Activated B cell treated with CpG ODN at 0.5 μM for 24 hours (primary cell): ENCODE measurements at regions of chr11 and their contacts with region 1.

Region 1: GRCh38 chr11:44235765-44236201 is 74.2 kb downstream of the ALX4 start:
- DNase-seq: no peak
- ATAC-seq: no peak
- H3K4me3 Mint-ChIP-seq: no peak overlapping the region
- H3K27ac Mint-ChIP-seq: no peak overlapping the region
- H3K4me1 Mint-ChIP-seq: no peaks in the 10 kb centered on the region
- H3K27me3 Mint-ChIP-seq: no peaks in the 10 kb centered on the region
- CTCF ChIP-seq: no peak

Region 2: GRCh38 chr11:44301856-44302231 is 66.1 kb after region 1 on chr11:
- CTCF ChIA-PET with region 1: no interaction called
- POLR2A ChIA-PET with region 1: interaction called, 14 read pairs
- intact Hi-C with region 1: no loop called
- DNase-seq: no peak
- ATAC-seq: peak; percentile 35
- H3K4me3 Mint-ChIP-seq: no peak overlapping the region
- H3K27ac Mint-ChIP-seq: no peak overlapping the region
- H3K4me1 Mint-ChIP-seq: peaks cover 32% of the 10 kb centered on the region
- H3K27me3 Mint-ChIP-seq: peaks cover 74% of the 10 kb centered on the region
- CTCF ChIP-seq: no peak